Endothelial cell of umbilical vein (primary cell): ENCODE measurements at regions of chr17 and their contacts with region 1.

Region 1: GRCh38 chr17:34306466-34306865 is 12.8 kb upstream of the CCL8 start:
- DNase-seq: peak; percentile 75
- H3K4me3 ChIP-seq: no peak overlapping the region
- H3K27ac ChIP-seq: no peak overlapping the region
- H3K4me1 ChIP-seq: no peaks in the 10 kb centered on the region
- H3K27me3 ChIP-seq: peaks cover 15% of the 10 kb centered on the region in 2 experiments
- CTCF ChIP-seq: peak; percentile 46 to 57
- POLR2A ChIP-seq: no peak

Region 2: DNA sequence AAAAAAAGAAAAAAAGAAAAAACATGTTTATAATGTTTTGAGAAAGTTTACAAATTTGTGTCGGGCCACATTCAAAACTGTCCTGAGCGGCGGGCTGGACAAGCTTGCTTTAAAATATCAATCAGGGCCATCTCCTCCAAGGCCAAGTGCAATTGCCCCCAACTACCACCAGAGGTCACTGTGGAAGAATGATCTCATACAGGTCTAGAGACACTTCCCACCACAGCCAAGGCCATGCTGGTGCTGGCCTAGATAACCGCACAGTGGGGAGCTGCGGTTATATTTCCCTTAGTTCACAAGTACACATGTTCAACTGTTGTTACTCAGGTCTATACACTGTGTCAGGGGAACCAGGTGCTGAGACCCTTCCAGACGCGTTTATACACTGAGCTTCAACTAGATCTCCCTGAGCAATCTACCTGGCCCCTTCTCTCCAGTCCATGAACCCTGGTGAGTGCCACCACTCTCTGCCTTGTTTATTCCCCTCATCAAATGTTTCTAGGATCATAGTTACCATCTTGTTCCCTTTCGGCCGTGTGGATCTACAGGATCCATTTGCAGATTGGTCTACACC is 135.1 kb before region 1 on chr17:
- CTCF ChIA-PET with region 1: interaction called, 19 read pairs
- POLR2A ChIA-PET with region 1: no interaction called
- dilution Hi-C with region 1: no loop called
- intact Hi-C with region 1: loop called (anchors 1 kb)
- DNase-seq: peak; percentile 73
- H3K4me3 ChIP-seq: no peak overlapping the region
- H3K27ac ChIP-seq: no peak overlapping the region
- H3K4me1 ChIP-seq: no peaks in the 10 kb centered on the region
- H3K27me3 ChIP-seq: peaks cover 12 to 19% of the 10 kb centered on the region in 2 experiments
- CTCF ChIP-seq: peak; percentile 87 to 91
- POLR2A ChIP-seq: no peak

Region 3: GRCh38 chr17:34235389-34236028 is 71.0 kb before region 1 on chr17:
- CTCF ChIA-PET with region 1: interaction called, 14 read pairs
- POLR2A ChIA-PET with region 1: no interaction called
- dilution Hi-C with region 1: no loop called
- intact Hi-C with region 1: loop called (anchors 1 kb)
- DNase-seq: peak; percentile 97
- H3K4me3 ChIP-seq: no peak overlapping the region
- H3K27ac ChIP-seq: peak overlapping the region; percentile 78
- H3K4me1 ChIP-seq: peaks cover 54% of the 10 kb centered on the region
- H3K27me3 ChIP-seq: no peaks in the 10 kb centered on the region
- CTCF ChIP-seq: no peak
- POLR2A ChIP-seq: no peak

Region 4: GRCh38 chr17:34248511-34249024 is 57.9 kb before region 1 on chr17:
- CTCF ChIA-PET with region 1: interaction called, 13 read pairs
- POLR2A ChIA-PET with region 1: no interaction called
- dilution Hi-C with region 1: no loop called
- intact Hi-C with region 1: loop called (anchors 1 kb)
- DNase-seq: peak; percentile 92
- H3K4me3 ChIP-seq: no peak overlapping the region
- H3K27ac ChIP-seq: peak overlapping the region; percentile 99
- H3K4me1 ChIP-seq: peaks cover 66% of the 10 kb centered on the region
- H3K27me3 ChIP-seq: no peaks in the 10 kb centered on the region
- CTCF ChIP-seq: no peak
- POLR2A ChIP-seq: no peak

Region 5: GRCh38 chr17:34275881-34276280 is 30.6 kb before region 1 on chr17:
- CTCF ChIA-PET with region 1: interaction called, 11 read pairs
- POLR2A ChIA-PET with region 1: no interaction called
- dilution Hi-C with region 1: no loop called
- intact Hi-C with region 1: no loop called
- DNase-seq: peak; percentile 90
- H3K4me3 ChIP-seq: no peak overlapping the region
- H3K27ac ChIP-seq: no peak overlapping the region
- H3K4me1 ChIP-seq: peaks cover 8% of the 10 kb centered on the region
- H3K27me3 ChIP-seq: peaks cover 2 to 7% of the 10 kb centered on the region in 2 experiments
- CTCF ChIP-seq: no peak
- POLR2A ChIP-seq: no peak

Region 6: DNA sequence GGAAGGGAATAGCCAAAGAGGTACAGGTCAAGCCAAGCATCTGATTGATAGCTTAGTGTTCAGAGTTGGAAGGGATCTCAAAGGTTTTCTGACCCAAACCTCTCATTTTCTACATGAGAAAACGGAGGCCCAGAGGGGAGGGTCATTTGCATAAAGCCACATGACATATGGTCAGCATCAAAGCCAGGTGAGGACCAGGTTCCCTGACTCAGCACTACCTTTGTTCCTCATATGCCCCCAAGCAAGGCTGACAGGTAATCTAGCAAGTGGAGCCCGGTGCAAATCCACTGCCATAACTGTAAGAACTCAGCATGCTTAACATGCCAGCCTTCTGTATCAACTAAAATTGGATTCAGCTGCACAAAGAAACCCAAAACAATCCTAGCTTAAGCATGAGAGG is 84.8 kb after region 1 on chr17:
- CTCF ChIA-PET with region 1: no interaction called
- POLR2A ChIA-PET with region 1: no interaction called
- dilution Hi-C with region 1: no loop called
- intact Hi-C with region 1: no loop called
- DNase-seq: no peak
- H3K4me3 ChIP-seq: no peak overlapping the region
- H3K27ac ChIP-seq: no peak overlapping the region
- H3K4me1 ChIP-seq: peaks cover 18% of the 10 kb centered on the region
- H3K27me3 ChIP-seq: peaks cover 3 to 8% of the 10 kb centered on the region in 2 experiments
- CTCF ChIP-seq: no peak
- POLR2A ChIP-seq: no peak

Region 7: DNA sequence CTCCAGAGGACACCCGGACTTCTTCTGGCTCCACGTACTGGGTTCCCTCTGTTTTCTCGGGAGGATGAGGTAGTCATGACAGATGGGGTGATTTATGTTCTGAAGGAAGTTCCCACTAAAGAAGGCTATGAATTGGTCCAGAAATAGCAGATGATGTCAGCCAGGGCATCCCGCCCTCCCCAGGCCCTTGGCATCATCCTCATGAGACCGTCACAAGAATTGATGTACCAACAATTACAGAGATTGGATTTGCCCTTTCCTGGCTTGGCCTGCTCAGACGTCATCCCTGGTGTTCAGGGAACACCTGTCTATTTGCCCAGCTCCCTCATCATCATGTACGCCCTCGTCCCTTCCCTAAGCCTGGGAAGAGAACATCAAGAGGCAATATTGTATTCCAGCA is 159.3 kb after region 1 on chr17:
- CTCF ChIA-PET with region 1: no interaction called
- POLR2A ChIA-PET with region 1: no interaction called
- dilution Hi-C with region 1: no loop called
- intact Hi-C with region 1: no loop called
- DNase-seq: no peak
- H3K4me3 ChIP-seq: no peak overlapping the region
- H3K27ac ChIP-seq: no peak overlapping the region
- H3K4me1 ChIP-seq: no peaks in the 10 kb centered on the region
- H3K27me3 ChIP-seq: no peaks in the 10 kb centered on the region
- CTCF ChIP-seq: no peak
- POLR2A ChIP-seq: no peak